Sigmoid colon (tissue), 7 donors: ENCODE measurements at regions of chrX and their contacts with region 1.

Region 1: GRCh38 chrX:136028251-136028984 is 43.2 kb downstream of the SLC9A6 start:
- DNase-seq: no peak
- H3K4me3 ChIP-seq: no peak overlapping the region
- H3K27ac ChIP-seq: peak overlapping the region; percentile 77 to 84 (median 82)
- H3K4me1 ChIP-seq: peaks cover 0 to 34% (median 23%) of the 10 kb centered on the region in 4 donors
- H3K27me3 ChIP-seq: no peaks in the 10 kb centered on the region
- CTCF ChIP-seq: peak in 3 of 4 experiments; percentile 46 to 51 (median 50)
- EP300 ChIP-seq: no peak
- POLR2A ChIP-seq: no peak

Region 2: GRCh38 chrX:135910251-135910650 is 118.2 kb before region 1 on chrX:
- intact Hi-C with region 1: no loop called
- DNase-seq: no peak
- H3K4me3 ChIP-seq: no peak overlapping the region
- H3K27ac ChIP-seq: no peak overlapping the region
- H3K4me1 ChIP-seq: no peaks in the 10 kb centered on the region
- H3K27me3 ChIP-seq: no peaks in the 10 kb centered on the region
- CTCF ChIP-seq: no peak
- EP300 ChIP-seq: no peak
- POLR2A ChIP-seq: no peak

Region 3: DNA sequence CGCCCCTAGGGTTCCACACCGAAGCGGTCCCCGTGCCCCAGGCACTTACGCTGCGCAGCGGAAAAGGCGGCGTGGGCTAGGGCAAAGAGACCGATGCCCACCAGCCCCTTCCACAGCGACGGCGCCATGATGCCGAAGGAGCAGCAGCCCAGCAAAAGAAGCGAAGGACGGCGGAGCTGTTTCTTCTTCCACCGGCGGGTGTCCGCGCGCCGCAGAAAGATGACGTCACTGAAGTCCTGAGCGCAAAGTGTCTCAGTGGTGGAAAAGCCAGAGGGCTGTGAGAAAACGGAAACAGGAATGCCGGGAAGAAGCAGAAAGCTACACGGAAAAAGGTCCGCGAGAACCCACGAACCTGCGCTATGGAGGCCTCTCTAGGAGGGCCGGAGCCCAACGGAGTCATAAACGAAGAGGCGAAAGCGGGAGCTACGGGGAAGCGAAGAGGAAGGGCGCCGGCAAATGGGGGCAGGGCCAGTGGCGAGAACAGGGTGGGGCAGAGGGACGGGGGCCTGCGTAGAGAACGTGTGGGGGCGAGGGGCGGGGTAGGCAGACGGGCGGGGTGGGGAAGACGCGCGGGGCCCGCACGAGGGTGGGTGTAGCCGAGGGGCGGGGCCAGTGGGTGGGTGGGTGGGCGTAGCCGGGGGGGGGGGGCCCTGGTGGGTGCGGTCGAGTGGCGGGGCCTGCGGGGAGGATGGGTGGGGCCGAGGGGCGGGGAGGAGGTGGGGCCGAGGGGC is 54.7 kb before region 1 on chrX and contains the start of gene MMGT1:
- intact Hi-C with region 1: no loop called
- DNase-seq: peak; percentile 94
- H3K4me3 ChIP-seq: peak within 1 kb of the TSS; percentile 53 to 66 (median 63)
- H3K27ac ChIP-seq: peak within 1 kb of the TSS; percentile 88 to 93 (median 92)
- H3K4me1 ChIP-seq: peaks cover 0 to 16% (median 12%) of the 10 kb centered on the region in 4 donors
- H3K27me3 ChIP-seq: no peaks in the 10 kb centered on the region
- CTCF ChIP-seq: no peak
- EP300 ChIP-seq: no peak
- POLR2A ChIP-seq: peak; percentile 9 to 21
- total RNA-seq, gene MMGT1: 27.7 to 35.1 (median 32.5) TPM

Region 4: DNA sequence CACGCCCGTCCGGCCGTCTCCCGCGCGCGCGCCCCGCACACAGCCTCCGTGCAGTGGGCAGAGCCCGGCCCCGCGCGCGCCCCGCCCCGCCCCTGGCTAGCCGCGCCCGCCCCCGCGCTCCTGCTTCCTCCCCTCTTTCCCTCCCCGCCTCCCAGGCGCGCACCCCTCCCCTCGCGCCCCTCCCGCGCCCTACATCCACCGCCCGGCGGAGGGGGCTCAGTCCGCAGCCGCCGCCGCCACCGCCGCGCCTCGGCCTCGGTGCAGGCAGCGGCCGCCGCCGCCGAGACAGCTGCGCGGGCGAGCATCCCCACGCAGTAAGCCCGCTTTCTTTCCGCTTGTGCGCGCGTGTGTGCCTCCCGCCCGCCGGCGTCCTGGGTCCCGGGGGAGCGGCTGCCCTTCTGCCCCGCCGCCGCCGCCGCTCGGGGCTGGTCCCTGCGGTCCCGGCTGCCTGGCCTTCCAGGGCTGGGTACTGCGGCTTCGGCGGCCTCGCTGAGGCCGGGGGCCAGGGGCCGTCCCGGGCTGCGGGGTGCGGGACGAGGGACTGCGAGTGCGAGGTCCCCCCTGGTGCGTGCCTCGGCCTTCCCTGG is 119.0 kb after region 1 on chrX and contains the start of gene FHL1:
- intact Hi-C with region 1: loop called (anchors 5 kb)
- DNase-seq: peak; percentile 90
- H3K4me3 ChIP-seq: peak within 1 kb of the TSS; percentile 71 to 88 (median 80)
- H3K27ac ChIP-seq: peak within 1 kb of the TSS; percentile 94 to 99 (median 97)
- H3K4me1 ChIP-seq: peaks cover 0 to 8% (median 0%) of the 10 kb centered on the region in 4 donors
- H3K27me3 ChIP-seq: no peaks in the 10 kb centered on the region
- CTCF ChIP-seq: no peak
- EP300 ChIP-seq: no peak
- POLR2A ChIP-seq: no peak
- total RNA-seq, gene FHL1: 701 to 1,465 (median 1,246) TPM

Region 5: DNA sequence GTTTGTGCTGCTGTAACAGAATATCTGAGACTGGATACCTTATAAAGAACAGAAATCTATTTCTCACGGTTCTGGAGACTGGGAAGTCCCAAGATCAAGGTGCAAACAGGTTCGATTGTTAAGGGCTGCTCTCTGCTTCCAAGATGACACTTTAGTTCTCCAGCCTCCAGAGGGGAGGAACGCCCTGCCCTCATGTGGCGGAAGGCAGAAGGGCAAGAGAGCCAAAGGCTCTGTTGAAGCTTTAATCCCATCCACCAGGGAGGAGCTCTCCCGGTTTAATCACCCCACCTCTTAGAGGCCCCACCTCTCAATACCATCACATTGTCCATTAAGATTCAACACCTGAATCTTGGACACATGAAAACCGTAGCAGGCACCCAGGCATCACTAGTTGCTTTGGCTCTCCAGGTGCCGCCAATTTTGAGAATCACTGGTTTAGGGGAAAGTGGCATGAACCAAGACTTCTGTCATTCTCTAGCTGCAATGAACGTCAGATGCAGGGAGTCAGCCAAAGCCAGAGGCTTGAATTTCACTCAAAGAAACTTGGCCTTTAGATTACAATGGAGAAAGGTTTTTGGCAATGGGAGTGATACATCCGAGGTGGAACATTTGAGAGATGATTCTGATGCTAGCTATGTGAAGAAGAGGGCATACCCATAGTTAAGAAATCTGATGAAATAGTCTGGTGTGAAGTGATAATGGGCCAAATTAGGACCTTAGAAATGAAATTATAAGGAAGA is 134.6 kb after region 1 on chrX:
- intact Hi-C with region 1: loop called (anchors 2 kb)
- DNase-seq: peak; percentile 83
- H3K4me3 ChIP-seq: no peak overlapping the region
- H3K27ac ChIP-seq: peak overlapping the region; percentile 94 to 99 (median 97)
- H3K4me1 ChIP-seq: peaks cover 0 to 84% (median 32%) of the 10 kb centered on the region in 4 donors
- H3K27me3 ChIP-seq: no peaks in the 10 kb centered on the region
- CTCF ChIP-seq: peak; percentile 41 to 59 (median 56)
- EP300 ChIP-seq: no peak
- POLR2A ChIP-seq: no peak

Region 6: DNA sequence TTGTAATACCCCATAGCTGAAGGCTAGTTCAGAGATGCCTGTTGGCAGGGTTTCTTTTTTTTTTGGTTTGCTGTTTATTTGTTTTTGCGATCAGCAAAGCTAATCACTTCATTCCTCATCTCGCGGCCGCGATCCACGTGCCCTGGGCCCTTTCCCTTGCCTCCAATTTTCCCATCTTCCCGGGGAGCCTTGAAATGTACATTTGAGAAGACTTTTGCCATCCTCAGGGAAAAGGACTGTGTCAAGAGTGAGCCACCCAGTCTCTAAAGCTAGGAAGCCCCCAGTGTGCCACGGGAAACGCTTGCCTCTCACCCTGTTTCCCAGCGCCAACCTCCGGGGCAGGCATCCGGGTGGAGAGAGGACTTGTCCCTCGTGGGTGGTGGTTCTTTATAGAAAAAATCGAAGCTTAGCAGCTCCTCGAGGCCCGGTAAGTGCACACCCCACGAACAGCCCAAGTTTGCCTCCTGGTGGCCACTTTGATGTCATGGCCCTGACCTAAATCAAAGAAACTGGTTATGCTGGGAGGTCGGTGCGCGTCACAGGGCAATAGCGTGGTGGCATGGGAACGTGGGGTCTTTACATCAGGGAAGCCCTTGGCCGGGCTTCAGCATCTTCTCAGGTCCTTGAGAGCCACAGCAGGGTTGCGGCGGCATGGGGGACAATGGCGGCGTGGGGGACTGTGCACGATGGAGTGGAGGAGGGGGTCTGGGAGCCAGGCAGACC is 180.8 kb after region 1 on chrX:
- intact Hi-C with region 1: loop called (anchors 2 kb)
- DNase-seq: peak; percentile 84
- H3K4me3 ChIP-seq: no peak overlapping the region
- H3K27ac ChIP-seq: peak overlapping the region; percentile 78 to 99 (median 95)
- H3K4me1 ChIP-seq: peaks cover 0 to 56% (median 48%) of the 10 kb centered on the region in 4 donors
- H3K27me3 ChIP-seq: no peaks in the 10 kb centered on the region
- CTCF ChIP-seq: peak; percentile 45 to 62 (median 52)
- EP300 ChIP-seq: no peak
- POLR2A ChIP-seq: no peak

Region 7: DNA sequence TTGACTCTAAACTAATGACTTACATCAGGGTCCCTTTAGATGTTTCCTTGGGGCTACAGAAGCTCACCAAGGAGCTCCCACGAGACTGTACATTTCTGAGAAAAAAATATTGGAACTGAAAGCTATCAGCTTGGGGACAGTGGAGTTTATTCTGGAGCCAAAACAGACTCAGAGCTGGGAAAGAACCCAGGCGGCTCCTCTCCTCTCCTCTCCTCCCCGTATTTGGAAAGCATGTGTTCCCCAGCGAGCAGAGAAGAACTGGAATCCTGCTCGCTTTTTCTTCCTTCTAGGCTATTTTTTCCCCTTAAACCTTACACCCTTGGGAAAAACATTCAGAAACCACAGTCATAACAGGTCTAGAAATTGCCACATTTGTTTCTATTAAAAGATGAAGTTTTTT is 227.1 kb after region 1 on chrX:
- intact Hi-C with region 1: no loop called
- DNase-seq: no peak
- H3K4me3 ChIP-seq: no peak overlapping the region
- H3K27ac ChIP-seq: peak overlapping the region; percentile 44 to 65 (median 52)
- H3K4me1 ChIP-seq: no peaks in the 10 kb centered on the region
- H3K27me3 ChIP-seq: no peaks in the 10 kb centered on the region
- CTCF ChIP-seq: no peak
- EP300 ChIP-seq: no peak
- POLR2A ChIP-seq: no peak

Region 8: DNA sequence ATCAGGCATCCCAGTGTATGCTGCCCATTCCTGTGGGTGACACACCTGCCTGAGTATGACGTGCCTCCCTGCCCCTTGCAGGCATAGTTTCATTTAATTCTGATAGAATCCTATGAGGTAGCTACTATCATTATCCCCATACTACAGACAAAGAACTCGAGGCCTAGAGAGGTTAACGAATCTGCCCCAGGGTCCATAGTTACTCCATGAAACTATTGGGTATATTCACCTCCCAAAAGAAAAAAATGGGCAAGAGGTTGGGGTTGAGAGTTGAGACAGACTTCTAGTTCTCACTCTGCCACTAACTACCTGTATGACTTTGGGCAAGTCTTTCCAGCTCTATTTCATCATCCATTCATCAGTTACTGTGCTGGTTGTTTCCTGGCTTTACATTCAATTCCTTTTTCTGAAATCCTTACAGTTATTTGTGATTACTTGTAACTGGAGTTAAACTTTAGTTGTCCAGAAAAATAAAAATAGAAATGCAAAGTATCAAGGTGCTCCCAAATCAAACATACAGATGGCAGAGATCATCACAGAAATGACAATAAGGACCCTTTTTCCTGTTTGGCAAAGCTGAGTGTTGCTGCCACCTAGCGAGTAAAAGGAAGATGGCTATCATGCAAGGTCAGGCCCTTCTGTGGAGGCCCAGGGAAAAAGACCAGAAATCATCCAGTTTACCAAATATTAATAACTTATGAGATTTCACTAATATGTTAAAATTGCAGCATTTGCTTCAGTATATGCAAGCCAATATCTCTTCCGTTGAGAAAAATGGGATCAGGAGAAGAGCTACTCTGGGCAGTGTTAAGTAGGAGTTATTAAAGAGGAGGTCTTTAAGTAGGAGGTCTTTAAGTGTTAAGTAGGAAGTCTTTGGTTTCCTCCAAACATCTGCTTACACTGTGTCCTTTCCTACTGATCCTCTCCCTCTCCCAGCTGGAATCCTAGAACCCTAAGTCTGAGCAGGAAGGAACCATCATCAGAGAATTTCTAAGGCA is 239.9 kb after region 1 on chrX:
- intact Hi-C with region 1: loop called (anchors 2 kb)
- DNase-seq: no peak
- H3K4me3 ChIP-seq: no peak overlapping the region
- H3K27ac ChIP-seq: no peak overlapping the region
- H3K4me1 ChIP-seq: no peaks in the 10 kb centered on the region
- H3K27me3 ChIP-seq: no peaks in the 10 kb centered on the region
- CTCF ChIP-seq: peak; percentile 41 to 64 (median 58)
- EP300 ChIP-seq: no peak
- POLR2A ChIP-seq: no peak

Region 9: GRCh38 chrX:136496770-136497598 is 468.6 kb after region 1 on chrX and contains the start of gene HTATSF1:
- intact Hi-C with region 1: loop called (anchors 10 kb)
- DNase-seq: peak; percentile 93
- H3K4me3 ChIP-seq: peak within 1 kb of the TSS; percentile 52 to 73 (median 65)
- H3K27ac ChIP-seq: peak within 1 kb of the TSS; percentile 90 to 95 (median 93)
- H3K4me1 ChIP-seq: peaks cover 0 to 12% (median 3%) of the 10 kb centered on the region in 4 donors
- H3K27me3 ChIP-seq: no peaks in the 10 kb centered on the region
- CTCF ChIP-seq: no peak
- EP300 ChIP-seq: no peak
- POLR2A ChIP-seq: no peak
- total RNA-seq, gene HTATSF1: 47.1 to 62.4 (median 55.0) TPM

Region 10: GRCh38 chrX:136694431-136695087 is 666.1 kb after region 1 on chrX:
- intact Hi-C with region 1: loop called (anchors 10 kb)
- DNase-seq: no peak
- H3K4me3 ChIP-seq: no peak overlapping the region
- H3K27ac ChIP-seq: no peak overlapping the region
- H3K4me1 ChIP-seq: no peaks in the 10 kb centered on the region
- H3K27me3 ChIP-seq: no peaks in the 10 kb centered on the region
- CTCF ChIP-seq: peak; percentile 12 to 37 (median 30)
- EP300 ChIP-seq: no peak
- POLR2A ChIP-seq: no peak